Right lobe of liver (tissue), 6 donors: ENCODE measurements at regions of chr6 and their contacts with region 1.

Region 1: GRCh38 chr6:110053395-110054240 is 75.5 kb downstream of the GPR6 start:
- DNase-seq: no peak
- ATAC-seq: peak; percentile 75 to 85 (median 78)
- H3K4me3 ChIP-seq: no peak overlapping the region
- H3K27ac ChIP-seq: no peak overlapping the region
- H3K4me1 ChIP-seq: no peaks in the 10 kb centered on the region
- H3K27me3 ChIP-seq: no peaks in the 10 kb centered on the region
- CTCF ChIP-seq: peak; percentile 68 to 82 (median 78)
- POLR2A ChIP-seq: no peak

Region 2: GRCh38 chr6:109526905-109527628 is 526.6 kb before region 1 on chr6:
- intact Hi-C with region 1: loop called in 1 of 2 experiments (anchors 10 kb)
- DNase-seq: peak in 1 of 3 donors; percentile 51
- ATAC-seq: peak; percentile 73 to 84 (median 78)
- H3K4me3 ChIP-seq: no peak overlapping the region
- H3K27ac ChIP-seq: no peak overlapping the region
- H3K4me1 ChIP-seq: no peaks in the 10 kb centered on the region
- H3K27me3 ChIP-seq: no peaks in the 10 kb centered on the region
- CTCF ChIP-seq: peak; percentile 54 to 64 (median 54)
- POLR2A ChIP-seq: no peak

Region 3: DNA sequence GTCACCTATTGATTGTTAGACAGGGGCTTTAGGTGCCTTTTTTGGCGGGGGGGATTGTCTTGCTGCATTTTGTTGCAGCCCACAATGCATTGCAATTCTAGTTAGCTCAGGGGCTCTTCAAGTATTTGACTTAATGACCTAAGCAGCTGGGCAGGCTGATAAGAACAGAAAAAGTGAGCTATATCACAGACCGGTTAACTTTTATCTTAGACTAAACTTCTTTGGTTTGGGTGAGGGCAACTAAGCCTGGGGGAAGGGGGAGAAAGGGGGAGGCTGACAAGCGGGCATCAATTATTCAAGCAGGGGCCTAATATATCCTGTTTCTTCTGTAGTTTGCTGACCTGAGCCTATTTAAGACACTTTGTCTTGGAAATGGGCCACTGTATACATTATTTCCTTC is 141.5 kb before region 1 on chr6:
- intact Hi-C with region 1: no loop called
- DNase-seq: no peak
- ATAC-seq: no peak
- H3K4me3 ChIP-seq: no peak overlapping the region
- H3K27ac ChIP-seq: no peak overlapping the region
- H3K4me1 ChIP-seq: no peaks in the 10 kb centered on the region
- H3K27me3 ChIP-seq: no peaks in the 10 kb centered on the region
- CTCF ChIP-seq: no peak
- POLR2A ChIP-seq: no peak